CD4-positive, alpha-beta memory T cell (primary cell): ENCODE measurements at regions of chr18 and their contacts with region 1.

Region 1: DNA sequence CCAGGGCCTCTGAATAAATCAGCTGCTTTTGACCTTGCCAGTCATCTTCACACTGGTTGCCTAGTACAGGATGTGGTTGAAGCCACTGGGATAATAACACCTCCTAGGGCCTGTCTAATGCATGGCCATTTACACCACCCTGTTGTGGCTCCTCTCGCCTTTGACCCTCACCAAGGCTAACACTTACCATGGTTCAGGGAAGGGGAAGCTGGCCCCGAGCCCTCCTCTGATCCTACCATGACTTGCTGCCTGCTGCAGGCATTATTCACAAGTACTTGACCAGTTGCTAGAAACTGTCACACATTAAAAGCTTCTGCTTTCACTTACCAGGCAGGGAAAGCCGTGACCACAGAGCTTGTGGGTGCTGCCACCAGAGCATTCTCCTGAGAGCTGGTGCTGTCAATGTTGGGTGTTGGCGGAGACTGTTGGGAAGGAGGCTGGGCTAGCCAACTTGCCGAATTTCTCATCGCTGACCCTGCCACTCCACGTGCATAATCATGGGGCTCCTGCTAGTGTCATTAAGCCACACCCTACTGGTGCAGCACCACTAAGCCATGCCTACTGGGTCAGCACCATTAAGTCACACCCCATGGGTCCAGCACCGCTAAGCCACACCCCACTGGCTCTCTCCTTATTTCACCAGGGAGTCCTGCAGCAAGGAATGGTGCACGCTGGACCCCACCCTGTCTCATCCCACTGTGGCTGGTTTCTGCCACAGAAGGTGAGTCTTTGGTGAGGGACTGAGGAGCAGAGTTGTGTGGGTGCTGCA is 47.0 kb upstream of the TTC39C start:
- DNase-seq: peak; percentile 32 to 60 (median 39)
- H3K4me3 ChIP-seq: peak overlapping the region in 1 of 2 donors; percentile 38
- H3K4me3 Mint-ChIP-seq: peak overlapping the region in 7 of 8 donors; percentile 60 to 87 (median 80)
- H3K27ac ChIP-seq: peak overlapping the region; percentile 17
- H3K27ac Mint-ChIP-seq: peak overlapping the region; percentile 89 to 99 (median 95)
- H3K4me1 ChIP-seq: peaks cover 90% of the 10 kb centered on the region
- H3K4me1 Mint-ChIP-seq: peaks cover 66 to 89% (median 81%) of the 10 kb centered on the region in 4 donors
- H3K27me3 ChIP-seq: no peaks in the 10 kb centered on the region
- H3K27me3 Mint-ChIP-seq: no peaks in the 10 kb centered on the region

Region 2: DNA sequence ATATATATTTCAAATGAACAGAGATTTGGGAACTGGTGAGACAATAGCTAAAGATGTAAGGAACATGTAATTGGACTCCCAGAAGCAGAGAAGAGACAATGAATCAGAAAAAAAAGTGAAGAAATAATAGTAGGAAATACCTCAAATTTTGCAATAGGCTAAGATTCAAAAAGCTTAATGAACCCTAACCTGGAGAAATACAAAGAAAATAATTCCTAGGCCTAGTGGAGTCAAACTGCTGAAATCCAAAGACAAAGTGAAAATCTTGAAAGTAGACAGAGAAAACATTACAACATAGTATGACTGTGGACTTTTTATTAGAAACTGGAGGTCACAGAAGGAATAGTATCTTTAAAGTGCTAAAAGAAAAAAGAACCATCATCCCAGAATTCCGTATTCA is 201.6 kb before region 1 on chr18:
- CTCF ChIA-PET with region 1: no interaction called
- POLR2A ChIA-PET with region 1: no interaction called
- intact Hi-C with region 1: no loop called
- DNase-seq: no peak
- H3K4me3 ChIP-seq: no peak overlapping the region
- H3K4me3 Mint-ChIP-seq: no peak overlapping the region
- H3K27ac ChIP-seq: no peak overlapping the region
- H3K27ac Mint-ChIP-seq: no peak overlapping the region
- H3K4me1 ChIP-seq: no peaks in the 10 kb centered on the region
- H3K4me1 Mint-ChIP-seq: peaks cover 0 to 2% (median 0%) of the 10 kb centered on the region in 4 donors
- H3K27me3 ChIP-seq: no peaks in the 10 kb centered on the region
- H3K27me3 Mint-ChIP-seq: peaks cover 14 to 27% of the 10 kb centered on the region in 2 donors

Region 3: GRCh38 chr18:23982155-23983079 is 14.9 kb after region 1 on chr18:
- CTCF ChIA-PET with region 1: interaction called, 4 read pairs
- POLR2A ChIA-PET with region 1: interaction called, 17 read pairs
- intact Hi-C with region 1: no loop called
- DNase-seq: no peak
- H3K4me3 ChIP-seq: no peak overlapping the region
- H3K4me3 Mint-ChIP-seq: peak overlapping the region in 4 of 8 donors; percentile 4 to 47 (median 14)
- H3K27ac ChIP-seq: no peak overlapping the region
- H3K27ac Mint-ChIP-seq: peak overlapping the region in 5 of 7 donors; percentile 2 to 89 (median 74)
- H3K4me1 ChIP-seq: peaks cover 35% of the 10 kb centered on the region
- H3K4me1 Mint-ChIP-seq: peaks cover 30 to 65% (median 50%) of the 10 kb centered on the region in 4 donors
- H3K27me3 ChIP-seq: no peaks in the 10 kb centered on the region
- H3K27me3 Mint-ChIP-seq: no peaks in the 10 kb centered on the region

Region 4: GRCh38 chr18:24002483-24002882 is 35.0 kb after region 1 on chr18:
- CTCF ChIA-PET with region 1: interaction called, 80 read pairs
- POLR2A ChIA-PET with region 1: interaction called, 241 read pairs
- intact Hi-C with region 1: loop called (anchors 1 kb)
- DNase-seq: no peak
- H3K4me3 ChIP-seq: no peak overlapping the region
- H3K4me3 Mint-ChIP-seq: peak overlapping the region in 7 of 8 donors; percentile 37 to 80 (median 68)
- H3K27ac ChIP-seq: peak overlapping the region; percentile 74
- H3K27ac Mint-ChIP-seq: peak overlapping the region; percentile 86 to 99 (median 91)
- H3K4me1 ChIP-seq: peaks cover 98% of the 10 kb centered on the region
- H3K4me1 Mint-ChIP-seq: peaks cover 60 to 87% (median 72%) of the 10 kb centered on the region in 4 donors
- H3K27me3 ChIP-seq: no peaks in the 10 kb centered on the region
- H3K27me3 Mint-ChIP-seq: no peaks in the 10 kb centered on the region

Region 5: GRCh38 chr18:24019641-24020331 is 52.3 kb after region 1 on chr18:
- CTCF ChIA-PET with region 1: interaction called, 4 read pairs
- POLR2A ChIA-PET with region 1: interaction called, 241 read pairs
- intact Hi-C with region 1: loop called (anchors 1 kb)
- DNase-seq: peak; percentile 73 to 82 (median 79)
- H3K4me3 ChIP-seq: peak overlapping the region in 1 of 2 donors; percentile 50
- H3K4me3 Mint-ChIP-seq: peak overlapping the region; percentile 78 to 100 (median 96)
- H3K27ac ChIP-seq: peak overlapping the region; percentile 75
- H3K27ac Mint-ChIP-seq: peak overlapping the region; percentile 85 to 99 (median 95)
- H3K4me1 ChIP-seq: peaks cover 83% of the 10 kb centered on the region
- H3K4me1 Mint-ChIP-seq: peaks cover 68 to 96% (median 79%) of the 10 kb centered on the region in 4 donors
- H3K27me3 ChIP-seq: no peaks in the 10 kb centered on the region
- H3K27me3 Mint-ChIP-seq: no peaks in the 10 kb centered on the region

Region 6: GRCh38 chr18:24075731-24076130 is 108.2 kb after region 1 on chr18:
- CTCF ChIA-PET with region 1: interaction called, 8 read pairs
- POLR2A ChIA-PET with region 1: interaction called, 4 read pairs
- intact Hi-C with region 1: loop called (anchors 1 kb)
- DNase-seq: no peak
- H3K4me3 ChIP-seq: no peak overlapping the region
- H3K4me3 Mint-ChIP-seq: peak overlapping the region in 5 of 8 donors; percentile 48 to 70 (median 64)
- H3K27ac ChIP-seq: no peak overlapping the region
- H3K27ac Mint-ChIP-seq: peak overlapping the region; percentile 79 to 97 (median 87)
- H3K4me1 ChIP-seq: peaks cover 22% of the 10 kb centered on the region
- H3K4me1 Mint-ChIP-seq: peaks cover 38 to 78% (median 57%) of the 10 kb centered on the region in 4 donors
- H3K27me3 ChIP-seq: no peaks in the 10 kb centered on the region
- H3K27me3 Mint-ChIP-seq: no peaks in the 10 kb centered on the region

Region 7: GRCh38 chr18:24219561-24220317 is 252.2 kb after region 1 on chr18:
- CTCF ChIA-PET with region 1: no interaction called
- POLR2A ChIA-PET with region 1: no interaction called
- intact Hi-C with region 1: no loop called
- DNase-seq: no peak
- H3K4me3 ChIP-seq: no peak overlapping the region
- H3K4me3 Mint-ChIP-seq: no peak overlapping the region
- H3K27ac ChIP-seq: no peak overlapping the region
- H3K27ac Mint-ChIP-seq: no peak overlapping the region
- H3K4me1 ChIP-seq: no peaks in the 10 kb centered on the region
- H3K4me1 Mint-ChIP-seq: no peaks in the 10 kb centered on the region
- H3K27me3 ChIP-seq: no peaks in the 10 kb centered on the region
- H3K27me3 Mint-ChIP-seq: peaks cover 0 to 3% of the 10 kb centered on the region in 2 donors